ENCODE measurements at regions of chr2 and their contacts with region 1.

Region 1: DNA sequence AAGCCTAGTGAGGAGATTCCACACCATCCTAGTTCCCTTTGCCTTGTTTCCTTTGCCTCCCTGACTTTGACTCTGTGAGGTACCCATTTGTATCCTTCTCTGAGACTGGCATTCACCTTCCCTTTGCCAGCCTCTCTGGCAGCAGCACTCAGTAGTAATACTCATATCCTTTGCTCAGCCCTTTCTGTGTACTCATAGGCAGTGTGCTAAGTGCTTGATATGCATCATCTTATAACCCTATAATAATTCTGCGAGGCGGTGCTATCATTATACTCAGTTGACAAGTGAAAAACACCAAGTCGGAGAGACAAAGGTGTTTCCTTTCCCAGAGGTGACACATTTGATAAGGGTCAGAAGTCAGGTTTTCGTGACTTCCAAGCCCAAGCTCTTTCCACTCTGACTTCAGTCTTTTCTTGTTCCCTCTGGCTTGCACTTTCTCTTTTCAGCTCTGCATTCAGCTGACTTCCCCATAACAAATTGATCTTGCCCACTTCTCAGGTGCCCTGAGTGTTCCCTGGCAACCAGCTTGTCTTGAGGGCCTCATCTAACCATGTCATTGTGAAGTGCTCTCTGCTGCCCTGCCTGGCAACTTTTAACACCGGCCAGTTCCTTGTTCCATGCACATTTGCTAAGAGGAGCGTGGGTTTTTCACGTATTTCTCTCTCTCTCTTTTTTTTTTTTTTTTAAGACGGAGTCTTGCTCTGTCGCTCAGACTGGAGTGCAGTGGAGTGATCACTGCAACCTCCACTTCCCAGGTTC is 94.5 kb upstream of the UPP2 start:
- H3K4me3 ChIP-seq: no peak overlapping the region
- H3K27ac ChIP-seq: no peak overlapping the region
- H3K4me1 ChIP-seq: no peaks in the 10 kb centered on the region
- CTCF ChIP-seq: 0 out of 2 replicates have a peak, but pooled peaks have one; percentile 10

Region 2: DNA sequence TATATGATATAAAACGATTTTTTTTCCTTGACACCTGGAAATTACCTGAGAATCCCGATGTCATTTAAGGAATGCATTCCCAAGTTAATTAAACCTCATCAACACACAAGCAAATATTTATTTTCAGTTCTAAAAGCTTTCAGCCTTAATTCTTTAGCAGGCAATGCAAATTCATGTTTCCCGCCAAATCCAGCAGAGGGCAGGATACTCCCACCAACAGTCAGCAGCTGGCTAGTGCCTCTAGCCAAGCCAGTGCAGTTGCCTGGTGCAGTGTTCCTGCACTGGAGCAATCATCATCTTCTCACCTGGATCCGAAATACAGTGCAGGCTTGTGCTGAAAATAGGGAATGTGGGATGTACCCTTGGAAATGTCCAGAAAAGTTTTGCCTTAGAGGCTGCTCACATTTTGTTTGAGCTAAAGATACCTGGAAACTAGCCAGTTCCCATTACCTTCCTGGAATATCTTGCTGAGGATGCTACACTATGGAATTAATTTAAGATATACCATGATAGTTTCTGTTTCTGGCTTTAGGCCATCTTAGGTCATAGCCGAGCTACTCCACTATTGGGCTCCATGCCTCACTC is 514.9 kb before region 1 on chr2:
- CTCF ChIA-PET with region 1: interaction called, 14 read pairs
- POLR2A ChIA-PET with region 1: no interaction called
- H3K4me3 ChIP-seq: no peak overlapping the region
- H3K27ac ChIP-seq: no peak overlapping the region
- H3K4me1 ChIP-seq: peaks cover 10% of the 10 kb centered on the region
- CTCF ChIP-seq: peak; percentile 62

Region 3: GRCh38 chr2:157497638-157498314 is 509.4 kb before region 1 on chr2:
- CTCF ChIA-PET with region 1: interaction called, 14 read pairs
- POLR2A ChIA-PET with region 1: no interaction called
- H3K4me3 ChIP-seq: no peak overlapping the region
- H3K27ac ChIP-seq: no peak overlapping the region
- H3K4me1 ChIP-seq: no peaks in the 10 kb centered on the region
- CTCF ChIP-seq: peak; percentile 38

Region 4: GRCh38 chr2:157777427-157777826 is 229.7 kb before region 1 on chr2:
- CTCF ChIA-PET with region 1: interaction called, 14 read pairs
- POLR2A ChIA-PET with region 1: no interaction called
- H3K4me3 ChIP-seq: no peak overlapping the region
- H3K27ac ChIP-seq: no peak overlapping the region
- H3K4me1 ChIP-seq: no peaks in the 10 kb centered on the region
- CTCF ChIP-seq: no peak

Region 5: DNA sequence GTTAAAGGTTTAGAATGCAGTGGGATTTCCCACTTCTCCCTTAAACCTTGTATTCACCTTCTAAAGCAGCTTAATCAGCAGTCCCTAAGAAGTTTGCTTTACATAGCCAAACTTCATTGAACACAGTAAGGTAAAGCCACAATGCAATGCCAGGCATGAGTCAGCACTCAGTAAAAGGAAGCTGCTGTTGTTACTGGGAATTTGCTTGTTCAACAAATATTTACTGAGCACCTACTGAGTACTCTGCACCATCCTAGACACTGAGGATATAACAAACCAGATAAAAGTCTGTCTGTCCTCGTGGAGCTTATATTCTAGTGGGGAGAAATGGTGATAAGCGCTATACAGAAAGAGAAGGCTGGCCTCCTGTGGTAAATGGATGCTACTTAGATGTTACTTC is 612.4 kb after region 1 on chr2:
- CTCF ChIA-PET with region 1: no interaction called
- POLR2A ChIA-PET with region 1: no interaction called
- H3K4me3 ChIP-seq: no peak overlapping the region
- H3K27ac ChIP-seq: no peak overlapping the region
- H3K4me1 ChIP-seq: no peaks in the 10 kb centered on the region
- CTCF ChIP-seq: no peak